Sigmoid colon (tissue), 7 donors: ENCODE measurements at regions of chr16 and their contacts with region 1.

Region 1: GRCh38 chr16:75265845-75266701 is 14.6 kb upstream of the BCAR1 start:
- DNase-seq: peak; percentile 90
- H3K4me3 ChIP-seq: peak overlapping the region; percentile 72 to 99 (median 86)
- H3K27ac ChIP-seq: peak overlapping the region; percentile 90 to 97 (median 95)
- H3K4me1 ChIP-seq: peaks cover 0 to 60% (median 52%) of the 10 kb centered on the region in 4 donors
- H3K27me3 ChIP-seq: no peaks in the 10 kb centered on the region
- CTCF ChIP-seq: no peak
- EP300 ChIP-seq: no peak
- POLR2A ChIP-seq: no peak

Region 2: GRCh38 chr16:75251280-75252048 is 14.6 kb before region 1 on chr16 and contains the start of gene BCAR1:
- intact Hi-C with region 1: loop called (anchors 2 kb)
- DNase-seq: peak; percentile 94
- H3K4me3 ChIP-seq: peak within 1 kb of the TSS; percentile 69 to 95 (median 86)
- H3K27ac ChIP-seq: peak within 1 kb of the TSS; percentile 91 to 96 (median 93)
- H3K4me1 ChIP-seq: peaks cover 0 to 97% (median 95%) of the 10 kb centered on the region in 4 donors
- H3K27me3 ChIP-seq: no peaks in the 10 kb centered on the region
- CTCF ChIP-seq: no peak
- EP300 ChIP-seq: no peak
- POLR2A ChIP-seq: no peak
- total RNA-seq, gene BCAR1: 21.7 to 42.9 (median 32.4) TPM

Region 3: DNA sequence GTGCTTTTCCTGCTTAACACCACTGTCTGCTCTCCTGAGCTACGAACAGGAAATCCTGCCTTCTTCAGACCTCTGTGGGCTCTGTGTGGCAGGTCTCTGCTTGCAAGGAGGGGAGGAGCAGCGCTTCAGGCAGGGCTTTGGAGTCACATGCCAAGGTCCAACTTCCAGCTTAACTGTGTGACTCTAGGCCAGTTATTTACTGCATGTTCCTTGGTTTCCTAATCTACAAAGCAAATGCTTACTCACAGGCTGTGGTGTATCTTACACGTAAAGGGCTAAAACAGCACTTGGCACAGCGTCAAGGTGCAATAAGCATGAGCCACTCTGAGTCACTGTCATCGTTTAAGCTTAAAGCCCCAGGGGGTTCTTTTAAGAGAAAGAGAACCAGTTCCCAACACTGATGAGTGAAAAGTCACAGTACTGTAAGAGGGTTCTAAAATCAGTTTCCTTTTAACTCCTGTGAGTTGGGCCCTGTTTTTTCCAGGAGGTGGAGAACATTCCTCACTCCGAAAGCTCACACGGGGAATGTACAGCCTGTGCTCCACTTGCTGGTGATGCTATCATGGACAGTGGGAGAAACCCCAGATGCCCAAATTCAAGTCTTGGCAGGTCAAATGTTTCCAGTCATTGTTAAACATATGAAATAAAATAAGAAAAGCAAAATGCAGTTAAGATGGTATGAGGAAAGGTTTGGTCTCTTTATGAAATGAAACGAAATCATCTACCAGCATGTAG is 39.5 kb after region 1 on chr16:
- intact Hi-C with region 1: loop called (anchors 1 kb)
- DNase-seq: peak; percentile 90
- H3K4me3 ChIP-seq: no peak overlapping the region
- H3K27ac ChIP-seq: peak overlapping the region; percentile 77 to 86 (median 80)
- H3K4me1 ChIP-seq: peaks cover 0 to 28% (median 24%) of the 10 kb centered on the region in 4 donors
- H3K27me3 ChIP-seq: no peaks in the 10 kb centered on the region
- CTCF ChIP-seq: no peak
- EP300 ChIP-seq: peak in 2 of 4 donors; percentile 58 to 59
- POLR2A ChIP-seq: no peak